ENCODE measurements at regions of chr3 and their contacts with region 1.

Region 1: DNA sequence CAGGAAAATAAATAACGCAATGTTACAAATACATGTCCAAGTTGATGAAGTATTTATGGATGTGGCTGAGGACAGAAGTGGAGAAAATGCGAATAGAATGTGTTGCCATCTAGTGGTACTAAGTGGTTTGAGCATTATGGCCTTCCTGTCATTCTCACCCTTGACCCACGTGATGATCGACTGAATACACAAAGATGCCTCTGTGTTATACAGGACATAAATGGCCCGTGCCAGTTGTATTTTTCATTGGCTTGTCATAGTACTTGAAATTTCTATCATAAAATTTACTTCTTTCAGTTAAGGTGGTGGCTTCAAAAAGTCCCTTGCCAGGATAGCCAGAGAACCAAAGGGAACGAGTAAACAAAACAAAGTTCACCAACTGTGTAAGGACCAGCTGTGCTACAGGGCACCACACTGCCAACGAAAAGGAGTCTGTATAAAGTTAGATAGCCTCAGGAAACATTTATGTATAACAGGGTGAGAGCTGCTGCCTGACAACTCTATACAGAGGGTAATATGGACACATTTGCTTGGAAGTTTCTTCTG is 103.7 kb downstream of the MYH15 start:
- DNase-seq: no peak

Region 2: GRCh38 chr3:107938143-107938542 is 468.6 kb before region 1 on chr3:
- intact Hi-C with region 1: loop called (anchors 5 kb)
- DNase-seq: no peak

Measured in cardiac septum (tissue), 1 donor.